CD4-positive, alpha-beta memory T cell (primary cell): ENCODE measurements at regions of chr18 and their contacts with region 1.

Region 1: DNA sequence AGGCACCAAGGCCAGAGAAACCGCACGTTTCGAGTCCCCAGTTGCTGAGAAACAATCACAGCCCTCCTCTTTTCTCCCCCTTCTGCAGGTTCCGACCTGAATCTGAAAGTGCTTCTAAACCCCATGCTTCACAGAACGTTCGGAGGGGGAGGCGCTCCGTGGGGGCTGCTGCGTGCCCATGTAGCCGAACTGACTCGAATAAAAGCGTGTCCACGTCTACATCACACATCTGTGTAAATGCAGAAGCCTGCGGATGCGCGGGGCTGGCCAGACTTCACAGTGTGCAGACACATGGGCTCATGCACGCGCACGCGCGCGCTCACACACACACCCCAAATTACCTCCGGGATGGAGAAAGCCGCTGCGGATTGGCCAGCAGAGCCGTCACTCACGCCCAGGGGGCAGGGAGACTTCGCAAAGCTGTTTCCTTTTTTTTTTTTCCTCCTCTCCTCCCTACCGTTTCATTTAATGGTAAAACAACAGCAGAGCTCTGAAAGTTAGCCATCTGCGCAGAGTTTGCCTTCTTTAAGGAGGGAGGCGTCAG is 2.3 kb downstream of the ZNF516 start:
- DNase-seq: peak; percentile 86 to 94 (median 92)
- H3K4me3 ChIP-seq: peak overlapping the region; percentile 38 to 75
- H3K4me3 Mint-ChIP-seq: peak overlapping the region; percentile 81 to 93 (median 89)
- H3K27ac ChIP-seq: peak overlapping the region; percentile 35
- H3K27ac Mint-ChIP-seq: peak overlapping the region; percentile 42 to 90 (median 82)
- H3K4me1 ChIP-seq: peaks cover 34% of the 10 kb centered on the region
- H3K4me1 Mint-ChIP-seq: peaks cover 18 to 52% (median 36%) of the 10 kb centered on the region in 4 donors
- H3K27me3 ChIP-seq: peaks cover 30% of the 10 kb centered on the region
- H3K27me3 Mint-ChIP-seq: peaks cover 49 to 56% of the 10 kb centered on the region in 2 donors

Region 2: GRCh38 chr18:75714766-75715165 is 778.0 kb before region 1 on chr18:
- CTCF ChIA-PET with region 1: no interaction called
- POLR2A ChIA-PET with region 1: no interaction called
- intact Hi-C with region 1: no loop called
- DNase-seq: no peak
- H3K4me3 ChIP-seq: no peak overlapping the region
- H3K4me3 Mint-ChIP-seq: no peak overlapping the region
- H3K27ac ChIP-seq: no peak overlapping the region
- H3K27ac Mint-ChIP-seq: no peak overlapping the region
- H3K4me1 ChIP-seq: no peaks in the 10 kb centered on the region
- H3K4me1 Mint-ChIP-seq: no peaks in the 10 kb centered on the region
- H3K27me3 ChIP-seq: no peaks in the 10 kb centered on the region
- H3K27me3 Mint-ChIP-seq: no peaks in the 10 kb centered on the region

Region 3: GRCh38 chr18:76450452-76451395 is 42.0 kb before region 1 on chr18:
- CTCF ChIA-PET with region 1: no interaction called
- POLR2A ChIA-PET with region 1: no interaction called
- intact Hi-C with region 1: loop called (anchors 5 kb)
- DNase-seq: peak in 1 of 5 donors; percentile 4
- H3K4me3 ChIP-seq: peak overlapping the region; percentile 54 to 63
- H3K4me3 Mint-ChIP-seq: peak overlapping the region; percentile 83 to 92 (median 88)
- H3K27ac ChIP-seq: no peak overlapping the region
- H3K27ac Mint-ChIP-seq: peak overlapping the region in 2 of 7 donors; percentile 9 to 57
- H3K4me1 ChIP-seq: peaks cover 13% of the 10 kb centered on the region
- H3K4me1 Mint-ChIP-seq: peaks cover 14 to 38% (median 25%) of the 10 kb centered on the region in 4 donors
- H3K27me3 ChIP-seq: no peaks in the 10 kb centered on the region
- H3K27me3 Mint-ChIP-seq: peaks cover 23 to 32% of the 10 kb centered on the region in 2 donors

Region 4: DNA sequence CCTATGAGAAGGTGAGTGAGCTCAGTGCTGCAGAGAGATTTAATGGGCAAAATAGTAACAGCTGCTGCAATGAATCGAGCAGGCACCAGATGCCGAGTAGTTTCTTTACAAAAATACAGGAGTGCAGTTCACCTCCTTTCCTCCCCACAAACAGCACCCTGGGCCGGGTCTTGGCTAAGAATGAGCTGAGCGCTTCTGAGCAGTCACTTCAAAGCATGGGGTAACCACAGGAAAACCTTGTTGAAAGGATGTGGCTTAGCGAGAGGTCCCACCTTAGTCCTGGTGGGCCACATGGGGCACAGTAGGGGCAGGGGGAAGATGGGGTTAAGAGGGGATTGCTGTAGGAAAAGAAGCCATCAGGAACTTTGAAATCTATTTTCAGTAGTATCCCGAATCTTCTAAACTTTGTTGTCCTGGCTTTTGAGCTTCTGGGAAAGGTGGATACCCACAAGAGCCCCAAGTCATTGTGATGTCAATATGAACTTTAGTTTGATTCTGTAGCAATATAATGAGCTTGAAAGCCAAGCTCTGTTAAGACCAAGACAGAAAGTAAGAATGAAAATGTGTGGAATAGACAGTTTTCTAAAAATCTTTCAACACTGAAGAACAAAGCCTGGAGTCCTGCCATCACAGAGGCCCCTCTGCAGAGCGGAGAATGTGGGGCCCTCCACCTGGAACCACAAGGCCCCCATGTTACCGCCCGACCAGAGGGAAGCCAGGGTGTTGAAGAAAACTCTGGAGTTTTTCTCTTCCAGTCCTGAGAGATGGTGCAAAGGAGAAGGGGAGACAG is 228.7 kb after region 1 on chr18:
- CTCF ChIA-PET with region 1: no interaction called
- POLR2A ChIA-PET with region 1: no interaction called
- intact Hi-C with region 1: loop called (anchors 5 kb)
- DNase-seq: peak; percentile 73 to 83 (median 80)
- H3K4me3 ChIP-seq: peak overlapping the region in 1 of 2 donors; percentile 27
- H3K4me3 Mint-ChIP-seq: peak overlapping the region; percentile 43 to 86 (median 76)
- H3K27ac ChIP-seq: no peak overlapping the region
- H3K27ac Mint-ChIP-seq: peak overlapping the region; percentile 67 to 88 (median 82)
- H3K4me1 ChIP-seq: peaks cover 53% of the 10 kb centered on the region
- H3K4me1 Mint-ChIP-seq: peaks cover 33 to 63% (median 48%) of the 10 kb centered on the region in 4 donors
- H3K27me3 ChIP-seq: no peaks in the 10 kb centered on the region
- H3K27me3 Mint-ChIP-seq: no peaks in the 10 kb centered on the region